ENCODE measurements at regions of chr1 and their contacts with region 1.

Region 1: GRCh38 chr1:28736450-28737306 is at the start of gene YTHDF2:
- DNase-seq: peak; percentile 99
- ATAC-seq: peak; percentile 99
- total RNA-seq, gene YTHDF2: 36.0 TPM

Region 2: DNA sequence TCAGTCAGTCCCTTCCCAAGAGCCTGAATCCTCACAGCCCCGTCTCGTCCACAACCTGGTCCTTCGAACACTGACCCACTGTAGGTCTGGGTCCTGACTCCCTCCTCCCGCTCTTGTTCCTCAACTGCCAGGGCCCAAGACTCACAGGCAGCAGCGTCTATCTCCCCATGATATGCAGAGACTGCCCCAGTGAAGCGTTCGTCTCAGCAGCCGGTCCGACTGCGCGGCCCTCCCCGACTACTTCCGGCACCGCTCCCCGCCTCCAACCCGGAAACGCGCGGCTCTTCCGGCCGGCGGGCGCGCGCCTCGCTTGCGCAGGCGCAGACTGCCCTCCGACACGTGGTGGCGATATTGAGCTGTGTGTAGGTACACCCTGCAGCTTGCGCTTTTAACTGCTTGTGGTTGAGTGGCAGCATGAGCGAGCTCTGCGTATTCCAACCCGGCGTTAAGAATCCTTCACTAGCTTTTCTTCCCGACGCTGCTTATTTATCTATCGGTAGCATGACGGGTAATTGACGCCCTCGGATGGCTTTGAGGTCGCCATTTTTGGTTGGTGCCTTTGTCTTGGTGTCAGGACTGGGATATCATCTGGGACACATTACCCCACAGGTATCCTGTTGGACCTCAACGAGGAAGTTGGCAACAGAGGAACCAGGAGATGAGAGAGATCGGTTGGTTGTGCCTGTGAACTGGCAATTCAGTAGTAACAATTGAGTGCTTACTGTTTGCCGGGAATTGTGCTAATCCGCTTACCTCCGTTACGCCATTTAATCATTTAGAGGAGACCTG is 93.6 kb before region 1 on chr1 and contains the start of gene TAF12:
- intact Hi-C with region 1: loop called (anchors 10 kb)
- DNase-seq: peak; percentile 95
- ATAC-seq: peak; percentile 95
- total RNA-seq, gene TAF12: 31.4 TPM

Region 3: GRCh38 chr1:28934676-28935075 is 198.0 kb after region 1 on chr1:
- intact Hi-C with region 1: no loop called
- DNase-seq: no peak
- ATAC-seq: no peak